Transverse colon (tissue), 4 donors: ENCODE measurements at regions of chr4 and their contacts with region 1.

Region 1: GRCh38 chr4:142443469-142443868 is 402.6 kb downstream of the INPP4B start:
- DNase-seq: no peak
- H3K4me3 ChIP-seq: no peak overlapping the region
- H3K27ac ChIP-seq: no peak overlapping the region
- H3K4me1 ChIP-seq: no peaks in the 10 kb centered on the region
- H3K27me3 ChIP-seq: no peaks in the 10 kb centered on the region
- CTCF ChIP-seq: no peak
- EP300 ChIP-seq: no peak
- POLR2A ChIP-seq: no peak

Region 2: DNA sequence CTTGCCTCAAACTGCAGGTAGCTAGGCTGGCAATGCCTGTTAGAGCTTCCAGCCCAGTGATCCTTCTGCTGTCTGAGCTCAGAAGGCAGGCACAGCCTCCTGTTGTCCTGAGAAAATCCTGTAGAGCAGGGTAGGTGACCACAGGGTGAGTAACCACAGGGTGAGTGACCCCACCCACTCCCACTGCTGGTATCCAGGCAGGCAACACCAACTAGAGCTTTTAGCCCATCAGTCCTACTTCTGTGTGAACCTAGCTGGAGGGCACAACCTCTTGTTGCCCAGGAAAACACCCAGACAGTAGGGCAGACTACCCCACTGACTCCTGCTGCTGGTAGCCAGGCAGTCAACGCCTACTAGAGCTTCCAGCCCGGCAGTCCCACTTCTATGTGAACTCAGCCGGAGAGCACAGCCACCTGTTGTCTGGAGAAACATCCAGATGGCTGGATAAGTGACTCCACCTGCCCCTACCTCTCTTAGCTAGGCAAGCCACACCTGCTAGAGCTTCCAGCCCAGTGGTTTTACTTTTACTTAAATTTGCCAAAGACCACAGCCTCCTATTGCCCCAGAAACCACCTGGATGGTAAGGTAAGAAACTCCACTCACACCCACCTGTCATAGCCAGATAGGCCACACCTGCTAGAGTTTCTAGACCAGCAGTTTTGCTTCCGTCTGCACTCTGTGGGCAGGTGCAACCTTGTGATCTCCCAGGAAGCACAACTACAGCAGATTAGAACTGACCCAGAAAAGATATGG is 31.0 kb after region 1 on chr4:
- in situ Hi-C with region 1: no loop called
- intact Hi-C with region 1: loop called (anchors 1 kb)
- DNase-seq: no peak
- H3K4me3 ChIP-seq: no peak overlapping the region
- H3K27ac ChIP-seq: peak overlapping the region in 1 of 4 donors; percentile 3
- H3K4me1 ChIP-seq: no peaks in the 10 kb centered on the region
- H3K27me3 ChIP-seq: no peaks in the 10 kb centered on the region
- CTCF ChIP-seq: no peak
- EP300 ChIP-seq: no peak
- POLR2A ChIP-seq: no peak